ENCODE measurements at regions of chr12 and their contacts with region 1.

Region 1: GRCh38 chr12:113647048-113647447 is 175.4 kb upstream of the LHX5 start:
- DNase-seq: peak in 2 of 4 experiments; percentile 28 to 71
- ATAC-seq: peak; percentile 33; the same call in 1 of the 3 replicates
- H3K4me3 ChIP-seq: no peak overlapping the region
- H3K27ac ChIP-seq: no peak overlapping the region
- H3K4me1 ChIP-seq: peaks cover 20 to 29% of the 10 kb centered on the region in 2 experiments
- H3K27me3 ChIP-seq: no peaks in the 10 kb centered on the region
- CTCF ChIP-seq: peak; percentile 47 to 64 (median 59)
- EP300 ChIP-seq: no peak
- POLR2A ChIP-seq: no peak
- RAD21 ChIP-seq: peak; percentile 46 to 75

Region 2: GRCh38 chr12:113196996-113197395 is 450.1 kb before region 1 on chr12:
- CTCF ChIA-PET with region 1: no interaction called
- POLR2A ChIA-PET with region 1: no interaction called
- in situ Hi-C with region 1: loop called (anchors 10 kb)
- intact Hi-C with region 1: no loop called
- DNase-seq: peak; percentile 73 to 87 (median 78)
- ATAC-seq: peak; percentile 97
- H3K4me3 ChIP-seq: no peak overlapping the region
- H3K27ac ChIP-seq: no peak overlapping the region
- H3K4me1 ChIP-seq: peaks cover 2 to 21% of the 10 kb centered on the region in 2 experiments; a peak in 4 of 5 replicates
- H3K27me3 ChIP-seq: no peaks in the 10 kb centered on the region
- CTCF ChIP-seq: peak; percentile 77 to 91 (median 78)
- EP300 ChIP-seq: no peak
- POLR2A ChIP-seq: no peak
- RAD21 ChIP-seq: peak; percentile 66 to 81

Region 3: GRCh38 chr12:113601656-113602263 is 45.3 kb before region 1 on chr12:
- CTCF ChIA-PET with region 1: no interaction called
- POLR2A ChIA-PET with region 1: no interaction called
- in situ Hi-C with region 1: no loop called
- intact Hi-C with region 1: no loop called
- DNase-seq: peak; percentile 48 to 62 (median 57)
- ATAC-seq: peak; percentile 79
- H3K4me3 ChIP-seq: no peak overlapping the region
- H3K27ac ChIP-seq: no peak overlapping the region
- H3K4me1 ChIP-seq: no peaks in the 10 kb centered on the region
- H3K27me3 ChIP-seq: peaks cover 0 to 15% of the 10 kb centered on the region in 2 experiments; a peak in 3 of 5 replicates
- CTCF ChIP-seq: no peak
- EP300 ChIP-seq: no peak
- POLR2A ChIP-seq: no peak
- RAD21 ChIP-seq: no peak

Region 4: GRCh38 chr12:113735131-113735530 is 88.1 kb after region 1 on chr12:
- CTCF ChIA-PET with region 1: no interaction called
- POLR2A ChIA-PET with region 1: no interaction called
- in situ Hi-C with region 1: no loop called
- intact Hi-C with region 1: loop called (anchors 2 kb)
- DNase-seq: no peak
- ATAC-seq: no peak
- H3K4me3 ChIP-seq: no peak overlapping the region
- H3K27ac ChIP-seq: no peak overlapping the region
- H3K4me1 ChIP-seq: no peaks in the 10 kb centered on the region
- H3K27me3 ChIP-seq: peaks cover 0 to 9% of the 10 kb centered on the region in 2 experiments; a peak in 2 of 5 replicates
- CTCF ChIP-seq: no peak
- EP300 ChIP-seq: no peak
- POLR2A ChIP-seq: no peak
- RAD21 ChIP-seq: no peak

Region 5: GRCh38 chr12:113862590-113863454 is 215.8 kb after region 1 on chr12:
- CTCF ChIA-PET with region 1: no interaction called
- POLR2A ChIA-PET with region 1: no interaction called
- in situ Hi-C with region 1: no loop called
- intact Hi-C with region 1: loop called (anchors 5 kb)
- DNase-seq: peak in 2 of 4 experiments; percentile 13 to 33
- ATAC-seq: peak; percentile 48
- H3K4me3 ChIP-seq: no peak overlapping the region
- H3K27ac ChIP-seq: no peak overlapping the region
- H3K4me1 ChIP-seq: peaks cover 23 to 26% of the 10 kb centered on the region in 2 experiments
- H3K27me3 ChIP-seq: no peaks in the 10 kb centered on the region
- CTCF ChIP-seq: no peak
- EP300 ChIP-seq: no peak
- POLR2A ChIP-seq: no peak
- RAD21 ChIP-seq: no peak

Region 6: GRCh38 chr12:113874999-113875561 is 228.0 kb after region 1 on chr12:
- CTCF ChIA-PET with region 1: no interaction called
- POLR2A ChIA-PET with region 1: no interaction called
- in situ Hi-C with region 1: no loop called
- intact Hi-C with region 1: no loop called
- DNase-seq: no peak
- ATAC-seq: no peak; the same call in 2 of the 3 replicates
- H3K4me3 ChIP-seq: no peak overlapping the region
- H3K27ac ChIP-seq: no peak overlapping the region
- H3K4me1 ChIP-seq: peaks cover 0 to 4% of the 10 kb centered on the region in 2 experiments; a peak in 2 of 5 replicates
- H3K27me3 ChIP-seq: no peaks in the 10 kb centered on the region
- CTCF ChIP-seq: no peak
- EP300 ChIP-seq: no peak
- POLR2A ChIP-seq: no peak
- RAD21 ChIP-seq: no peak

Region 7: GRCh38 chr12:113933201-113933786 is 286.2 kb after region 1 on chr12:
- CTCF ChIA-PET with region 1: no interaction called
- POLR2A ChIA-PET with region 1: no interaction called
- in situ Hi-C with region 1: no loop called
- intact Hi-C with region 1: loop called (anchors 5 kb)
- DNase-seq: peak; percentile 81 to 85 (median 82)
- ATAC-seq: peak; percentile 83
- H3K4me3 ChIP-seq: 0 out of 2 replicates have a peak overlapping the region, but pooled peaks have one; percentile 10
- H3K27ac ChIP-seq: peak overlapping the region; percentile 74
- H3K4me1 ChIP-seq: peaks cover 45 to 49% of the 10 kb centered on the region in 2 experiments
- H3K27me3 ChIP-seq: no peaks in the 10 kb centered on the region
- CTCF ChIP-seq: peak in 2 of 3 experiments; percentile 29 to 40; a peak in 3 of 6 replicates
- EP300 ChIP-seq: no peak; the same call in 1 of the 2 replicates
- POLR2A ChIP-seq: no peak
- RAD21 ChIP-seq: no peak

Measured in K562 (cell line).